Breast epithelium (tissue), 4 donors: ENCODE measurements at regions of chr15 and their contacts with region 1.

Region 1: GRCh38 chr15:66386204-66387123 is at the start of gene MAP2K1:
- DNase-seq: peak; percentile 97 to 98
- H3K4me3 ChIP-seq: peak within 1 kb of the TSS; percentile 77 to 91 (median 86)
- H3K27ac ChIP-seq: peak within 1 kb of the TSS; percentile 89
- H3K4me1 ChIP-seq: peaks cover 0 to 5% of the 10 kb centered on the region in 2 donors
- H3K27me3 ChIP-seq: no peaks in the 10 kb centered on the region
- CTCF ChIP-seq: peak; percentile 25 to 50 (median 26)
- POLR2A ChIP-seq: no peak
- total RNA-seq, gene MAP2K1: 29.2 to 59.7 (median 38.5) TPM

Region 2: GRCh38 chr15:66497502-66498455 is 111.3 kb after region 1 on chr15 and contains the start of gene SNAPC5:
- intact Hi-C with region 1: loop called (anchors 5 kb)
- DNase-seq: peak; percentile 95 to 96
- H3K4me3 ChIP-seq: peak within 1 kb of the TSS; percentile 79 to 91 (median 89)
- H3K27ac ChIP-seq: peak within 1 kb of the TSS; percentile 93 to 94
- H3K4me1 ChIP-seq: peaks cover 2 to 5% of the 10 kb centered on the region in 2 donors
- H3K27me3 ChIP-seq: no peaks in the 10 kb centered on the region
- CTCF ChIP-seq: peak; percentile 87 to 98 (median 96)
- POLR2A ChIP-seq: no peak
- total RNA-seq, gene SNAPC5: 26.9 to 35.1 (median 31.5) TPM

Region 3: GRCh38 chr15:67999320-68000100 is 1613.0 kb after region 1 on chr15:
- intact Hi-C with region 1: loop called (anchors 5 kb)
- DNase-seq: no peak
- H3K4me3 ChIP-seq: no peak overlapping the region
- H3K27ac ChIP-seq: no peak overlapping the region
- H3K4me1 ChIP-seq: no peaks in the 10 kb centered on the region
- H3K27me3 ChIP-seq: no peaks in the 10 kb centered on the region
- CTCF ChIP-seq: no peak
- POLR2A ChIP-seq: no peak